ENCODE measurements at regions of chr3 and their contacts with region 1.

Region 1: GRCh38 chr3:11379233-11379823 is 107.1 kb downstream of the ATG7 start:
- DNase-seq: peak; percentile 70
- ATAC-seq: peak; percentile 86
- H3K4me3 ChIP-seq: no peak overlapping the region
- H3K27ac ChIP-seq: no peak overlapping the region
- H3K4me1 ChIP-seq: peaks cover 8% of the 10 kb centered on the region
- H3K27me3 ChIP-seq: no peaks in the 10 kb centered on the region
- CTCF ChIP-seq: peak; percentile 74
- POLR2A ChIP-seq: 0 out of 2 replicates have a peak, but pooled peaks have one; percentile 42
- RAD21 ChIP-seq: peak; percentile 83

Region 2: GRCh38 chr3:11140054-11140712 is 239.1 kb before region 1 on chr3:
- CTCF ChIA-PET with region 1: no interaction called
- POLR2A ChIA-PET with region 1: no interaction called
- dilution Hi-C with region 1: no loop called
- in situ Hi-C with region 1: no loop called
- intact Hi-C with region 1: no loop called
- DNase-seq: no peak
- ATAC-seq: no peak
- H3K4me3 ChIP-seq: no peak overlapping the region
- H3K27ac ChIP-seq: no peak overlapping the region
- H3K4me1 ChIP-seq: peaks cover 12% of the 10 kb centered on the region
- H3K27me3 ChIP-seq: no peaks in the 10 kb centered on the region
- CTCF ChIP-seq: no peak
- POLR2A ChIP-seq: no peak
- RAD21 ChIP-seq: no peak

Region 3: GRCh38 chr3:11168881-11169805 is 210.2 kb before region 1 on chr3:
- CTCF ChIA-PET with region 1: no interaction called
- POLR2A ChIA-PET with region 1: no interaction called
- dilution Hi-C with region 1: no loop called
- in situ Hi-C with region 1: no loop called
- intact Hi-C with region 1: no loop called
- DNase-seq: peak; percentile 67
- ATAC-seq: peak; percentile 40
- H3K4me3 ChIP-seq: no peak overlapping the region
- H3K27ac ChIP-seq: peak overlapping the region; percentile 74
- H3K4me1 ChIP-seq: peaks cover 29% of the 10 kb centered on the region
- H3K27me3 ChIP-seq: no peaks in the 10 kb centered on the region
- CTCF ChIP-seq: no peak
- POLR2A ChIP-seq: no peak
- RAD21 ChIP-seq: no peak

Region 4: GRCh38 chr3:11530153-11530721 is 150.9 kb after region 1 on chr3:
- CTCF ChIA-PET with region 1: interaction called, 3 read pairs
- POLR2A ChIA-PET with region 1: no interaction called
- dilution Hi-C with region 1: no loop called
- in situ Hi-C with region 1: no loop called
- intact Hi-C with region 1: loop called (anchors 5 kb)
- DNase-seq: peak; percentile 98
- ATAC-seq: peak; percentile 86
- H3K4me3 ChIP-seq: no peak overlapping the region
- H3K27ac ChIP-seq: peak overlapping the region; percentile 67
- H3K4me1 ChIP-seq: peaks cover 26% of the 10 kb centered on the region
- H3K27me3 ChIP-seq: no peaks in the 10 kb centered on the region
- CTCF ChIP-seq: peak; percentile 42
- POLR2A ChIP-seq: no peak
- RAD21 ChIP-seq: peak; percentile 65

Region 5: GRCh38 chr3:11643605-11644087 is 264.3 kb after region 1 on chr3 and contains the start of gene VGLL4:
- CTCF ChIA-PET with region 1: interaction called, 3 read pairs
- POLR2A ChIA-PET with region 1: no interaction called
- dilution Hi-C with region 1: no loop called
- in situ Hi-C with region 1: no loop called
- intact Hi-C with region 1: loop called (anchors 2 kb)
- DNase-seq: peak; percentile 94
- ATAC-seq: peak; percentile 82
- H3K4me3 ChIP-seq: peak within 1 kb of the TSS; percentile 90
- H3K27ac ChIP-seq: peak within 1 kb of the TSS; percentile 100
- H3K4me1 ChIP-seq: peaks cover 16% of the 10 kb centered on the region
- H3K27me3 ChIP-seq: no peaks in the 10 kb centered on the region
- CTCF ChIP-seq: peak; percentile 23
- POLR2A ChIP-seq: peak; percentile 93
- RAD21 ChIP-seq: peak; percentile 52
- total RNA-seq, gene VGLL4: 26.2 and 34.2 TPM in 2 replicates

Region 6: GRCh38 chr3:11719406-11720230 is 340.3 kb after region 1 on chr3:
- CTCF ChIA-PET with region 1: no interaction called
- POLR2A ChIA-PET with region 1: no interaction called
- dilution Hi-C with region 1: no loop called
- in situ Hi-C with region 1: no loop called
- intact Hi-C with region 1: loop called (anchors 5 kb)
- DNase-seq: peak; percentile 28
- ATAC-seq: peak; percentile 68
- H3K4me3 ChIP-seq: peak overlapping the region; percentile 76
- H3K27ac ChIP-seq: peak overlapping the region; percentile 83
- H3K4me1 ChIP-seq: no peaks in the 10 kb centered on the region; the same call in none of the 2 replicates
- H3K27me3 ChIP-seq: peaks cover 5% of the 10 kb centered on the region
- CTCF ChIP-seq: no peak
- POLR2A ChIP-seq: no peak
- RAD21 ChIP-seq: no peak

Region 7: DNA sequence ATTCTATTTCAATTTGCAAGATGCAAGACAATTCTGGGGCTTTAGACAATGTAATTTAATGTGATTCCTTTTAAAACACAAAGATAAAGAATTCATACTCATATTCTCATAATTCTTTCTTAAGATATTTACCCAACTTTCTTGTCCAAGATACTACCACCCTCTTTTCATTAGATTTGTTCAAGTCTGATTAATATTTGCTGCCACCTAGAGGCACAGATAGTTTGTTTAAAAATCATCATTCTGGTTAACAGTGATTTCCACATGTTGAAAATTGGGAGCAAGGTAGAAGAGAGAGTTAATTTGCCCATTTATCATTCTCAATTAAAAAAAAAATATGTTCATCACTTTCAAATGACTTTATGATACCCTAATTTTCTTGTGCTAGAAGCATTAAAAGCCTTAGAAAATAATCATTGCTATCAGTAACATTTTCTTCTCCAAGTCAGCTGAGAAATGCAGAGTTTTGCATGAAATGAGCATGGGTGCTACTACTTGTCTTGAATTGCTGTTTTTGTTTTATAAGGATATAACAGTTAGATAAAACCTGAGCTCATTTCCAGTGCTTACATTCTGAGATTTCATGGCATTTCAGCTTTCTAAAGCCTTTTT is 455.8 kb after region 1 on chr3:
- CTCF ChIA-PET with region 1: no interaction called
- POLR2A ChIA-PET with region 1: no interaction called
- dilution Hi-C with region 1: no loop called
- in situ Hi-C with region 1: loop called (anchors 10 kb)
- intact Hi-C with region 1: loop called (anchors 1 kb)
- DNase-seq: peak; percentile 46
- ATAC-seq: peak; percentile 49; the same call in 1 of the 2 replicates
- H3K4me3 ChIP-seq: no peak overlapping the region
- H3K27ac ChIP-seq: no peak overlapping the region
- H3K4me1 ChIP-seq: no peaks in the 10 kb centered on the region
- H3K27me3 ChIP-seq: no peaks in the 10 kb centered on the region
- CTCF ChIP-seq: peak; percentile 61
- POLR2A ChIP-seq: no peak
- RAD21 ChIP-seq: peak; percentile 64

Measured in IMR-90 (cell line).